Calu3 (cell line): ENCODE measurements at regions of chr12 and their contacts with region 1.

Region 1: GRCh38 chr12:46071769-46072624 is 81.6 kb upstream of the SCAF11 start:
- DNase-seq: peak; percentile 78
- H3K4me3 Mint-ChIP-seq: no peak overlapping the region
- H3K27ac Mint-ChIP-seq: peak overlapping the region; percentile 68
- H3K4me1 Mint-ChIP-seq: peaks cover 22% of the 10 kb centered on the region
- H3K27me3 Mint-ChIP-seq: no peaks in the 10 kb centered on the region
- CTCF ChIP-seq: peak; percentile 84

Region 2: DNA sequence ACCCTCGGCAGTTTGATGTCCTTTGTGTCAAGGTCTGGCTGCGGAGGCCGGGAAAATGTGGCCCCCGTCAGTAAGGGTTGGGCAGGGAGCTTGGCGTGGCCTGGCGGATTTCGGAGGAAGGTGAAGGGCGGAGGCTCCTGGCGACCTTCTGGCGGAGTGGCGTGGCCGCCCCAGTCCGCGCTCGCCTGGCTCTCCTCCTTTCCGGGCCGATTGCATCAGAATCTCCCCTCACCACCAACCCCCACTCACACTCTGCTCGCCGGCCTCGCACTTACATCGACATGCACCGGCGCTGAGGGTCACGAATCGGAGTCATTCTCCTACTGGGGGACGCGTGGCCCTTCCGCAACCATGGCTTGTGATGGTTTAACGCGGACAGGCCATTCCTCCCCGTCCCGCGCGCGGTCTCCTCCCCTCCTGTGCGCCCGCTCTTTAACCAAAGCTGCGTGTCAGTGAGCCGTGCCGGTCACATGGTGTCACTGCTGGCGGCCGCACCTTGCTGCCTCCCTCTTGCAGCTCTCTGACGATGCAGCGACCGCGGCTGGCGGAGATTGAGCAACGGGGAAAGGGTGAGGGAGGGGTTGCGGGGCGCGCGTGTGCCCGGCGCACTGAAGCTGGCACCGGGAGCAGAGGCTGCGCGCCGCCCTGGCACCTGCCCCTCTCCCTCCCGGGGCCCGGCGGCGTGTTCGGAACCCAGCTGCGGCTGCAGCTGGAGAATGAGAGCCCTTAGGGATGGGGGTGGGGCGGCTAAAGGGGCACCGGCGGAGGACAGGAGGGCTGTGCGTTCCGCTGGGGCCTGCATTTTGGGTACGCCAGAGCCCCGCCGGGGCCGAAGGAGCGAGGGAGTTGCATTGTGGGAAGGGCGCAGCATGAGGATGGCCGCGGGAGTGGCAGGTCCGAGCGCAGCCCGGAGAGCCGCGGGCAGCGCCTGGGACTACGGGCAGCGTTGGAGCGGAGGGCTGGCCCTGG is 196.9 kb after region 1 on chr12 and contains the start of gene SLC38A1:
- CTCF ChIA-PET with region 1: no interaction called
- intact Hi-C with region 1: loop called (anchors 10 kb)
- DNase-seq: peak; percentile 82
- H3K4me3 Mint-ChIP-seq: no peak within 1 kb of the TSS
- H3K27ac Mint-ChIP-seq: no peak within 1 kb of the TSS
- H3K4me1 Mint-ChIP-seq: peaks cover under 1% of the 10 kb centered on the region
- H3K27me3 Mint-ChIP-seq: no peaks in the 10 kb centered on the region
- CTCF ChIP-seq: no peak
- total RNA-seq, gene SLC38A1: 113 and 132 TPM in 2 replicates